ENCODE measurements at regions of chr13 and their contacts with region 1.

Region 1: GRCh38 chr13:98842864-98843481 is 90.5 kb upstream of the SLC15A1 start:
- DNase-seq: peak; percentile 78 to 87 (median 83)
- H3K4me3 ChIP-seq: no peak overlapping the region
- H3K27ac ChIP-seq: no peak overlapping the region
- H3K4me1 ChIP-seq: peaks cover 0 to 3% (median 0%) of the 10 kb centered on the region in 4 experiments
- H3K27me3 ChIP-seq: peaks cover 0 to 13% (median 11%) of the 10 kb centered on the region in 5 experiments

Region 2: GRCh38 chr13:98827449-98827848 is 15.5 kb before region 1 on chr13:
- CTCF ChIA-PET with region 1: interaction called, 13 read pairs
- POLR2A ChIA-PET with region 1: no interaction called
- DNase-seq: no peak
- H3K4me3 ChIP-seq: no peak overlapping the region
- H3K27ac ChIP-seq: no peak overlapping the region
- H3K4me1 ChIP-seq: no peaks in the 10 kb centered on the region
- H3K27me3 ChIP-seq: peaks cover 0 to 32% (median 3%) of the 10 kb centered on the region in 5 experiments

Region 3: DNA sequence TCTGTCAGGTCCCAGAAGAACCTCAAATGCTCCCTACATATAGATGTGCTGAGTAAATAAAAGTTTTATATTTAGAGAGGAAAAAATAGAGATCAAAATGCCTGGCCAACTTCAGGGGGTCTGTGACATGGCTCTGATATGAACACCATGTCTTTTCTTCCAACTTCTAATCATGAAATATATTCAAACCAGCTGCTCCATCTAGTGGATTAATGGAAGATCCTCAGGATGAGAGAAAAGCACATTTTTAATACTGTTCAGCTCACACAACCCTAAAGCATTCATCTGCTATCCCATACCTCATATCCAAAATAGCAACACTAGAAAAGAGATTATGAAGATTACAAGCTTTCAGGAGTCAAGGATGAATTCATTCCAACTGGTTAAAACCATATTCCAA is 190.8 kb after region 1 on chr13:
- CTCF ChIA-PET with region 1: interaction called, 32 read pairs
- POLR2A ChIA-PET with region 1: interaction called, 3 read pairs
- DNase-seq: peak; percentile 36 to 58 (median 53)
- H3K4me3 ChIP-seq: no peak overlapping the region
- H3K27ac ChIP-seq: no peak overlapping the region
- H3K4me1 ChIP-seq: no peaks in the 10 kb centered on the region
- H3K27me3 ChIP-seq: peaks cover 3 to 82% (median 31%) of the 10 kb centered on the region in 5 experiments

Region 4: DNA sequence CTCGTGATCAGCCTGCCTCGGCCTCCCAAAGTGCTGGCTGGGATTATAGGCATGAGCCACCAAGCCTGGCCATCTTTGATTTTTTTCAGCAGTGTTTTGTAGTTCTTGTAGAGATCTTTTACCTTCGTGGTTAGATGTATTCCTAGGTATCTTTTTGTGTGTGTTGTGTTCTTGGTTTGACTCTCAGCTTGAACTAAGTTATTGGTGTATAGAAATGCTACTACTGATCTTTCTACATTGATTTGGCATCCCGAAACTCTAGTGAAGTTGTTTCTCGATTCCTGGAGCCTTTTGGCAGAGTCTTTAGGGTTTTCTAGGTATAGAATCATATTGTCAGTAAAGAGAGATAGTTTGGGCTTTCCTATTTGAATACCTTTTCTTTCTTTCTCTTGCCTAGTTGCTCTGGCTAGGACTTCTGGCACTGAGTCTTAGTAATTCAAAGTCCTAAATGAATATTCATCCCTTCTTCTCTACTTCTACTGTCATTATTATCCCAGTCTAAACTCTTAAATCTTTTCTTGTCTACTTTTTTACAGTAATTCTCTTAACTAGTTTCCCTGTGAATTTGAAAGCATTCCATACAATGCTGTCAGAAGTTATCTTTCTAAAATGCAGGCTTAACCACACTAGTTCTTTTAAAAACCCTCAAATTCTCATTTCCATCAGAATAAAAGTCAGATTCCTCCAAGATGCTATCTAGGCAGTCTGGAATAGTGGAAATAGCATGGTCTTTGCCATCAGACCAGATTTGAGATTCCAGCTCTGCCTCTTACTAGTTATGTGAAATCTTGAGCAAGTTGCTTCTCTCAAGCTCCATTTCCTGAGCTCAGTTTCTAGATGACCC is 408.2 kb after region 1 on chr13:
- CTCF ChIA-PET with region 1: no interaction called
- POLR2A ChIA-PET with region 1: no interaction called
- DNase-seq: no peak
- H3K4me3 ChIP-seq: no peak overlapping the region
- H3K27ac ChIP-seq: no peak overlapping the region
- H3K4me1 ChIP-seq: no peaks in the 10 kb centered on the region
- H3K27me3 ChIP-seq: no peaks in the 10 kb centered on the region